ENCODE measurements at regions of chr10 and their contacts with region 1.

Region 1: GRCh38 chr10:90862908-90863514 is 5.2 kb upstream of the HTR7 start:
- DNase-seq: no peak
- ATAC-seq: no peak
- H3K4me3 Mint-ChIP-seq: no peak overlapping the region
- H3K27ac Mint-ChIP-seq: no peak overlapping the region
- H3K4me1 Mint-ChIP-seq: peaks cover 4% of the 10 kb centered on the region
- H3K27me3 Mint-ChIP-seq: peaks cover 38% of the 10 kb centered on the region

Region 2: DNA sequence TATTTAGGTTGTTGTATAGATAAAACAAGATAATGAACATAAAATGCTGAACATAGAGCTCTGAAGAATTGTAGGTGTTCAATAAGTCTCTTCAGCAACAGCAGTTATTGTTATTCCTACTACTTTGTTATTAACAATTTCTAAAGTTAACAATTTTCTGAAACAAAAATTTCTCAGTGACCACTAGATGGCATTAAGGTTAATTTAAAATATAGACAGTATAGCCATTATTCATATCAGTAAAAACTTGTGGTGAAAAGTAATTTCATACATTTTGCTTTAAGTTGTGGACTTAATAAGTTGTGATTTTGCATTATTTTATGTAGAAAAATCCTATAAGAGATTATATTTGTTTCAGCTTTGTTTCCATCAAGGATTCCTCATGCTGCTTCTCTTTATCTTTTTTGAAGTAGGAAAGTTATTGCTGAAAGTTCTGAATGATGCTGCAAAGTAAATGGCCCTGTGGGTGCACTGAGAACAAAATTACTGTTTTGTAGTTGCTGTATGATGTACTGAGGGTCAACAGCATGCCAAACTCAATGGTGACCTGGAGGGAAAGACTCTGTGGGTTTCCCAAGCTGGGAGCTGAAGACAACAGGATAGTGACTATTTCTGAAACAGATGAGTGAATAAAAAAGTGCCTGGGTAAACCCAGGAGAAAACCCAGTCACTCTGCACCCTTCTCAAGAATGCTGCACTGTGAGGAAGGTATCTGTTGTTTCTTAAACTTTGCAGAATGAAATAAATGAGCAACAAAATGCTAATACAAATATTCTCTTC is 908.0 kb before region 1 on chr10:
- CTCF ChIA-PET with region 1: no interaction called
- POLR2A ChIA-PET with region 1: no interaction called
- intact Hi-C with region 1: loop called in 1 of 2 experiments (anchors 10 kb)
- DNase-seq: peak; percentile 6
- ATAC-seq: peak; percentile 47
- H3K4me3 Mint-ChIP-seq: no peak overlapping the region
- H3K27ac Mint-ChIP-seq: no peak overlapping the region
- H3K4me1 Mint-ChIP-seq: peaks cover 2% of the 10 kb centered on the region
- H3K27me3 Mint-ChIP-seq: peaks cover 5% of the 10 kb centered on the region

Region 3: GRCh38 chr10:90148116-90148855 is 714.7 kb before region 1 on chr10:
- CTCF ChIA-PET with region 1: no interaction called
- POLR2A ChIA-PET with region 1: no interaction called
- intact Hi-C with region 1: loop called in 1 of 2 experiments (anchors 5 kb)
- DNase-seq: no peak
- ATAC-seq: no peak
- H3K4me3 Mint-ChIP-seq: no peak overlapping the region
- H3K27ac Mint-ChIP-seq: no peak overlapping the region
- H3K4me1 Mint-ChIP-seq: no peaks in the 10 kb centered on the region
- H3K27me3 Mint-ChIP-seq: no peaks in the 10 kb centered on the region

Region 4: GRCh38 chr10:90751107-90751997 is 111.7 kb before region 1 on chr10:
- CTCF ChIA-PET with region 1: interaction called, 10 read pairs
- POLR2A ChIA-PET with region 1: no interaction called
- intact Hi-C with region 1: loop called (anchors 1 kb)
- DNase-seq: peak; percentile 62
- ATAC-seq: peak; percentile 58
- H3K4me3 Mint-ChIP-seq: no peak overlapping the region
- H3K27ac Mint-ChIP-seq: no peak overlapping the region
- H3K4me1 Mint-ChIP-seq: no peaks in the 10 kb centered on the region
- H3K27me3 Mint-ChIP-seq: peaks cover 11% of the 10 kb centered on the region

Region 5: GRCh38 chr10:90798482-90798881 is 64.5 kb before region 1 on chr10:
- CTCF ChIA-PET with region 1: no interaction called
- POLR2A ChIA-PET with region 1: no interaction called
- intact Hi-C with region 1: no loop called
- DNase-seq: no peak
- ATAC-seq: peak; percentile 44
- H3K4me3 Mint-ChIP-seq: no peak overlapping the region
- H3K27ac Mint-ChIP-seq: no peak overlapping the region
- H3K4me1 Mint-ChIP-seq: no peaks in the 10 kb centered on the region
- H3K27me3 Mint-ChIP-seq: peaks cover 8% of the 10 kb centered on the region

Region 6: DNA sequence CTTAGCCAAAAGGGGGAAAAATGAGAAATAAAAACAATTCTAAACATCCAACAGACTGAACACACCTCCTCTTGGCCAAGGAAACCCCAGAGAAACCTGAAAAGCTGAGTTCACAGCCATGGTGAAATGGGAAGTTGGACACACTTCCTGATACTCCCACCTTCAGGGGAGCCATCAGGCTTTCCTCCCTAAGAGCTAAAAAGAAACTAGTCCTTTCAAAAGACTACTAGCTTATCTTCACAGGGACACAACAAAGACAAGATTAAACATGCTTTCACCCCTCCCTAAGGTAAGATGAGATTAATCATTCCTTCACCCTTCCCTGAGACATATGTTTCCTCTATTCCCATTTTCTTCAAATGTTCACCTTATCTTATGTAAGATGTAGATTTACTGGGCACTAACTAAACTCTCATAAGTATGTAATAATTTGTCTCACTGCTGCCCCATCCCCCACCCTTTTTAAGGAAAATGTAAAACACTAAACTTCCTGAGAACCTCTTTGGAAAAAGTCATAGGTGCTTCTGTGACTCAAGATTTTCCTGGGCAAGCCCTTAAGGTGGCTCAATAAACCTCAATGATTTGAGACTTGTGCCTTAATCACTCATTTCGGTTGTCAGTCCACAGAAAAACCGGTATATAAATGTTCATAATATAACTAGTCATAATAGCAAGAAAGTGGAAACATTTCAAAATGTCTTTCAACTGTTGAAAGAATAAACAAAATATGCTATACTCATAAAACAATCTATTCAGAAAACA is 45.7 kb before region 1 on chr10:
- CTCF ChIA-PET with region 1: no interaction called
- POLR2A ChIA-PET with region 1: no interaction called
- intact Hi-C with region 1: no loop called
- DNase-seq: no peak
- ATAC-seq: no peak
- H3K4me3 Mint-ChIP-seq: no peak overlapping the region
- H3K27ac Mint-ChIP-seq: no peak overlapping the region
- H3K4me1 Mint-ChIP-seq: no peaks in the 10 kb centered on the region
- H3K27me3 Mint-ChIP-seq: peaks cover 9% of the 10 kb centered on the region

Region 7: GRCh38 chr10:90879062-90879461 is 16.1 kb after region 1 on chr10:
- CTCF ChIA-PET with region 1: interaction called, 10 read pairs
- POLR2A ChIA-PET with region 1: no interaction called
- intact Hi-C with region 1: no loop called
- DNase-seq: no peak
- ATAC-seq: peak; percentile 30
- H3K4me3 Mint-ChIP-seq: no peak overlapping the region
- H3K27ac Mint-ChIP-seq: peak overlapping the region; percentile 24
- H3K4me1 Mint-ChIP-seq: peaks cover 11% of the 10 kb centered on the region
- H3K27me3 Mint-ChIP-seq: no peaks in the 10 kb centered on the region

Region 8: DNA sequence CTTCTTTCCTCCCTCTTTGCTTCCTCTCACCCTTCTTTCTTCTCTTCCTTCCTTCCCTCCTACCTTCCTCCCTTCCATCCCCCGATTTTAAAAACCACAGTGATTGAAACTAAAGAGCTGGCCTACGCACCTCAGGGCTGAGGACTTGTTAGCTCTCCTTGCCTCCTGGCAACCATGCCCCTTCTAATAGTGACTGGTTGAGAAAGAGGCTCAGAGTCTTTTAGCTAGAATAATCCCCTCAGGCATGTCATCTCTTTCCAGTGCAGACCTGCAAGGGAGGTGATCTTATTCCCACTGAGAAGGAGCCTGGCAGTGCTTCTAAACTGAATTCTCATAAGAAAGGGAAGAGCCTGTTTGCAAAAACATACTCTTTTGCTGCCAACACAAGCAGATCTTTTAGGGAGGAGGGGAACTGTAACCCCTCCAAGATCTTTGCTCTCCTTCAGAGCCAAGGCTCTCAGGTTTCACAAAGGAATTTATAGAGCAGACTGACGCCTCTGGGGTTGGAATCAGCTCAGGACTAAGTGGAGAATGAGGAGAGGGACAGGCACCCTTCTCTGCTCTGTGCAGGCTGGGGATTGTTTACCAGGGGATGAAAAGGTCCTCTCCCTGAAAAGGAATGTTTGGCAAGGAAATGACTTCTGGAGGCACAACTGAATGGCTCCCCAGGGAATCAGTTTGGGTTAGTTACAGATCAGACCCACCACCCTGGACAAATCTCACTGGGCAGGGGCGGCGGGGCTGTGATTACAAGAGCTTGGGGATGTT is 67.2 kb after region 1 on chr10:
- CTCF ChIA-PET with region 1: no interaction called
- POLR2A ChIA-PET with region 1: no interaction called
- intact Hi-C with region 1: no loop called
- DNase-seq: no peak
- ATAC-seq: no peak
- H3K4me3 Mint-ChIP-seq: no peak overlapping the region
- H3K27ac Mint-ChIP-seq: no peak overlapping the region
- H3K4me1 Mint-ChIP-seq: no peaks in the 10 kb centered on the region
- H3K27me3 Mint-ChIP-seq: peaks cover 12% of the 10 kb centered on the region